Lower lobe of right lung (tissue), 2 donors: ENCODE measurements at regions of chr5 and their contacts with region 1.

Region 1: DNA sequence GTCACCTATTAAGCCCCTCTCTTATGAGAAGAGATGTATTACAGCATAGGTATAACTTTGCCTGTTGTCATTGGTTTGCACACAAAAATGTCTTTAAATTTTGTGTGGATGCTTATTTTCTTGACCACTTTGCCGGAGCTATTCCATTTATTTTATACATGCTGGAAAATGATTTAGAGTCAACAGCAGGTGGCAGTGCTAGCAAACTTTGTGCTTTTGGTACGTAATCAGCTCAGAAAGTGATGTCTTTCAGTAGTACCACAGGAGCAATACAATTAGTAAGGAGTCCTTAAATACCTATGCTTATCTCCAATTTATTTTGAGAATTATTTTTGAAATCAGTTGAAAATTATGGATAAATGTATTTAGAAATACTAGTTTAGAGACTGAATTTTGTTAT is 19.8 kb upstream of the NUDT12 start:
- DNase-seq: no peak
- ATAC-seq: no peak
- H3K4me3 ChIP-seq: no peak overlapping the region
- H3K27ac ChIP-seq: no peak overlapping the region
- H3K4me1 ChIP-seq: no peaks in the 10 kb centered on the region
- H3K27me3 ChIP-seq: no peaks in the 10 kb centered on the region
- CTCF ChIP-seq: peak; percentile 41

Region 2: DNA sequence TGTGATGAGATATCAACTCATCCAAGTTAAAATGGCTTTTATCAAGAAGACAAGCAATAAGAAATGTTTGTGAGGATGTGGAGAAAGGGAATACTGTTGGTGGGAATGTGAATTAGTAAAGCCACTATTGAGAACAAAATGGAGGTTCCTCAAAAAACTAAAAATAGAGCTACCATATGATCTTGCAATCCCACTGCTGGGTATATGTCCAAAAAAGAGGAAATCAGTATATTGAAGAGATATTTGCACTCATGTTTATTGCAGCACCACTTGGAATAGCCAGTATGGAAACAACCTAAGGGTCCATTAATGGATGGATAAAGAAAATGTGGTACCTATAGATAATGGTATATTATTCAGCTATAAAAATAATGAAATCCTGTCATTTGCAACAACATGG is 437.2 kb before region 1 on chr5:
- intact Hi-C with region 1: no loop called
- DNase-seq: no peak
- ATAC-seq: no peak
- H3K4me3 ChIP-seq: no peak overlapping the region
- H3K27ac ChIP-seq: no peak overlapping the region
- H3K4me1 ChIP-seq: no peaks in the 10 kb centered on the region
- H3K27me3 ChIP-seq: no peaks in the 10 kb centered on the region
- CTCF ChIP-seq: no peak

Region 3: DNA sequence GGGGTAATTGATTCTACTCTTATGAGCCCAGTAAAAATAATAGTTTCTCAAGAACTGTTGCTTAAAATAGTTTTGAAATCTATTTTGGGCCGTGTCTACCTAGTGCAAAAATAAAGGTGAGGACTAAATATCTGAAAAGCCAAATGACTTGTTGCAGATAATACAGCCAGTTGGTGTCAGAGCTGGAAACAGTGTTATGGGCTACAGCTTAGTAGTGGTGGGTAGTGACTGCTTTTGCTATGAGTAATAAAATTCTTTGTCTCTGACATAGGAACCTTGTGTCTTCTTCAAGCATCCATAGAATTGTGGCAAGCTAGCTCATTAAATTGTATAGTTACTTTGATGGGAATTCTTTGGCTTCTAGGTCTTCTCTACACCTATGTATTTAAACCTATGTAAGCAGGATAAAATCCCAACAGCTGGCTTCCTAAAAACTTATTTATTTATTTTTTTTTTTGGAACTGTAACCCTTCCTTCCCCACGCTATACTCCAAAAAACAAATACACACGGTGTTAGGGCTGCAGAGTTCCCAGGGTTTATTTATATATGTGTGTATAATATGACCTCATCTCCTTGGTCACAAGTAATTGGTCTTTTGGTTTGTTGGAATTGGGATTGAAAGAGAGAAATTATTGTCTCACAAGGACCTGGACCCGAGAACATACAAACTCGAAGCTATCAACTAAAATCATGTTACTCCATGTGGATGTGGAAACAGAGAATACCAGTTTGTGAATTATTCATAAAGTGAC is 157.7 kb before region 1 on chr5:
- intact Hi-C with region 1: no loop called
- DNase-seq: no peak
- ATAC-seq: no peak
- H3K4me3 ChIP-seq: no peak overlapping the region
- H3K27ac ChIP-seq: no peak overlapping the region
- H3K4me1 ChIP-seq: no peaks in the 10 kb centered on the region
- H3K27me3 ChIP-seq: no peaks in the 10 kb centered on the region
- CTCF ChIP-seq: no peak

Region 4: GRCh38 chr5:104170926-104171325 is 588.6 kb after region 1 on chr5:
- intact Hi-C with region 1: loop called (anchors 10 kb)
- DNase-seq: no peak
- ATAC-seq: no peak
- H3K4me3 ChIP-seq: no peak overlapping the region
- H3K27ac ChIP-seq: no peak overlapping the region
- H3K4me1 ChIP-seq: no peaks in the 10 kb centered on the region
- H3K27me3 ChIP-seq: no peaks in the 10 kb centered on the region
- CTCF ChIP-seq: no peak

Region 5: DNA sequence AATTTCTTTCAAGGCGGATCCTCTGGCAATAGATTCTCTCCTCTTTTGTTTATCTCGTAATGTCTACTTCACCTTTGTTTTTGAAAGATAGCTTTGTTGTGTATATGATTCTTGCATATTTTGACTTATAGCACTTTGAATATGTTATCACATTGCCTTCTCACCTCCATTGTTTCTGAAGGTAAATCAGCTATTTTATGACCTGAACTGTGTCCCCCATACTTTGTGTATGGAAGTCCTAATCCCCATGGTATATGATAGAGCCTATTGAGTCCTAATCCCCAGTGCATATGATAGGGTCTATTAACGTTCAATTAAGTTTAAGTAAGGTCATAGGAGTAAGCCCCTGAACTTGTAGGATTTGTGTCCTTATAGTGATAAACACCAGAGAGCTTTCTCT is 890.4 kb after region 1 on chr5:
- intact Hi-C with region 1: no loop called
- DNase-seq: no peak
- ATAC-seq: no peak
- H3K4me3 ChIP-seq: no peak overlapping the region
- H3K27ac ChIP-seq: no peak overlapping the region
- H3K4me1 ChIP-seq: no peaks in the 10 kb centered on the region
- H3K27me3 ChIP-seq: no peaks in the 10 kb centered on the region
- CTCF ChIP-seq: no peak